Pancreas (tissue), 10 donors: ENCODE measurements at regions of chr17 and their contacts with region 1.

Region 1: DNA sequence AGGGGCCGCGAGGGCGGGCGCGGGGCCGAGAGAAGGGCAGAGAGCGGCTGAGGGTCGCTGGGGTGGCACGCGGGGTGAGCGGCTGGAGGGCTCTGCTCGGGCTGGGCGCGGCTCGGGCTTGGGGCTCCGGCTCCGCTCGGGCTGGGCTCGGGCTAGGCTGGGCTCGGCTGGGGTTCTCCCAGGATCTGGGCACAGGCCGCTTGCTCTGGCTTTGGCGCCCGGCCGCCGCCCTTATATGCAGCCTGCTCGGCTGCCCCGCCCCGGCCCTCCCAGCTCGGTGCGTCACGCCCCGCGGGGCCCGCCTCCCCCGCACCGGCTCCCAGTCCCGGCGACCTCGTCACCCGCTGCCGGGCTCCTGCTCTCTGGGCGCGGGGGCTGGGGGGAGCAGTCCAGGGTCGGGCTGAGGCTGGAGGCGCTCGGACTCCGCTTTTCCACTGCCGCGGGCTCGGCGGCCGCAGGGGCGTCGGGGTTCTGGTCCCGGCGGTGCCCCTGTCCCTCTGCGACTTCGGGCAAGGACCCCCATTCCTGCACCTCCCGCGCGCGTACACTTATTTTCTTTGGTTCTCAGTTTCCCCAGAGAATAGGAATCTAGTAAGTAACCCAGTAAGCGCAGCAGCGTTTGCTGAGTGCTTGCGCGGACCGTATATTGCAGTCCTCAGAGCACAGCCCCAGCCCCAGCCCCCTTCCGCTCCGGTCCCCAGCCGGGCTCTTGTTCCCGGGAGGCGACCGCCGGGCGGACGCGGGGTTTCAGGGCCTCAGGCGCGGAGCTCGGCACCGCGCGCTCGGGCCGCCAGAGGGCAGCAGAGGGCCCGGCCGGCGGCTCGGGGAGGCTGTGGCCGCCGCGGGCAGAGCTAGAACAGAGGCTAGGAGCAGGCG is at the start of gene RASD1:
- DNase-seq: peak; percentile 88 to 98 (median 94)
- ATAC-seq: peak; percentile 91 to 94 (median 93)
- H3K4me3 ChIP-seq: peak within 1 kb of the TSS; percentile 40 to 61 (median 50)
- H3K27ac ChIP-seq: peak within 1 kb of the TSS; percentile 62 to 80 (median 70)
- H3K4me1 ChIP-seq: peaks cover 9 to 11% (median 9%) of the 10 kb centered on the region in 3 donors
- H3K27me3 ChIP-seq: no peaks in the 10 kb centered on the region
- CTCF ChIP-seq: peak; percentile 95 to 98 (median 97)
- total RNA-seq, gene RASD1: 4.9 to 30.7 (median 10.6) TPM

Region 2: GRCh38 chr17:17356149-17356930 is 140.1 kb before region 1 on chr17:
- intact Hi-C with region 1: loop called in 1 of 3 experiments (anchors 5 kb)
- DNase-seq: peak; percentile 56 to 87 (median 74)
- ATAC-seq: peak; percentile 90 to 98 (median 97)
- H3K4me3 ChIP-seq: no peak overlapping the region
- H3K27ac ChIP-seq: no peak overlapping the region
- H3K4me1 ChIP-seq: no peaks in the 10 kb centered on the region
- H3K27me3 ChIP-seq: peaks cover 0 to 3% (median 0%) of the 10 kb centered on the region in 4 donors
- CTCF ChIP-seq: peak; percentile 95 to 98 (median 97)

Region 3: DNA sequence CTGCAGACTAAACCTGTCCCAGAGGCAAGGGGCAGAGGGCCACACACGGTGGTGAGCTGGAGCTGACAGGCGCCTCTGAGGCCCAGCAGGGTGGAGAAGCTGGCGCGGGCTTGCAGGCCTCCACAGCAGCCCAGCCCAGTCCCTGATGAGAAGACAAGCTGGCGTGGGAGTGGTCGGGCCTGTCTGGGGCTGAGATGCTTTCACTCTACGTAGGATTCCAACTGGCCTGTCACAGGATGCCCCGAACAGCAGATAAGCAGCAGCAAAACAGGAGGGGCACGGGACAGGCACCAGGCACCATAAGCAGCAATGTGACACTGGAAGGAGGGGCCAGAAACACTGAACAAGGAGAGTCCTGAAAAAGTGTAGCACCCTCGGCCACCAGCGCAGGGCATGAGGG is 54.9 kb after region 1 on chr17:
- intact Hi-C with region 1: no loop called
- DNase-seq: peak in 1 of 6 donors; percentile 5
- ATAC-seq: no peak
- H3K4me3 ChIP-seq: no peak overlapping the region
- H3K27ac ChIP-seq: no peak overlapping the region
- H3K4me1 ChIP-seq: no peaks in the 10 kb centered on the region
- H3K27me3 ChIP-seq: no peaks in the 10 kb centered on the region
- CTCF ChIP-seq: no peak

Region 4: GRCh38 chr17:17561408-17562145 is 65.2 kb after region 1 on chr17:
- intact Hi-C with region 1: loop called in 2 of 3 experiments (anchors 5 kb)
- DNase-seq: peak in 3 of 6 donors; percentile 73 to 84 (median 73)
- ATAC-seq: peak; percentile 62 to 87 (median 80)
- H3K4me3 ChIP-seq: no peak overlapping the region
- H3K27ac ChIP-seq: peak overlapping the region in 2 of 4 donors; percentile 10 to 19
- H3K4me1 ChIP-seq: no peaks in the 10 kb centered on the region
- H3K27me3 ChIP-seq: no peaks in the 10 kb centered on the region
- CTCF ChIP-seq: no peak

Region 5: GRCh38 chr17:17568749-17569195 is 72.3 kb after region 1 on chr17:
- intact Hi-C with region 1: loop called in 2 of 3 experiments (anchors 5 kb)
- DNase-seq: peak; percentile 82 to 99 (median 90)
- ATAC-seq: peak; percentile 75 to 82 (median 78)
- H3K4me3 ChIP-seq: no peak overlapping the region
- H3K27ac ChIP-seq: peak overlapping the region in 3 of 4 donors; percentile 10 to 55 (median 33)
- H3K4me1 ChIP-seq: peaks cover 30 to 42% (median 30%) of the 10 kb centered on the region in 3 donors
- H3K27me3 ChIP-seq: no peaks in the 10 kb centered on the region
- CTCF ChIP-seq: peak; percentile 65 to 85 (median 79)

Region 6: DNA sequence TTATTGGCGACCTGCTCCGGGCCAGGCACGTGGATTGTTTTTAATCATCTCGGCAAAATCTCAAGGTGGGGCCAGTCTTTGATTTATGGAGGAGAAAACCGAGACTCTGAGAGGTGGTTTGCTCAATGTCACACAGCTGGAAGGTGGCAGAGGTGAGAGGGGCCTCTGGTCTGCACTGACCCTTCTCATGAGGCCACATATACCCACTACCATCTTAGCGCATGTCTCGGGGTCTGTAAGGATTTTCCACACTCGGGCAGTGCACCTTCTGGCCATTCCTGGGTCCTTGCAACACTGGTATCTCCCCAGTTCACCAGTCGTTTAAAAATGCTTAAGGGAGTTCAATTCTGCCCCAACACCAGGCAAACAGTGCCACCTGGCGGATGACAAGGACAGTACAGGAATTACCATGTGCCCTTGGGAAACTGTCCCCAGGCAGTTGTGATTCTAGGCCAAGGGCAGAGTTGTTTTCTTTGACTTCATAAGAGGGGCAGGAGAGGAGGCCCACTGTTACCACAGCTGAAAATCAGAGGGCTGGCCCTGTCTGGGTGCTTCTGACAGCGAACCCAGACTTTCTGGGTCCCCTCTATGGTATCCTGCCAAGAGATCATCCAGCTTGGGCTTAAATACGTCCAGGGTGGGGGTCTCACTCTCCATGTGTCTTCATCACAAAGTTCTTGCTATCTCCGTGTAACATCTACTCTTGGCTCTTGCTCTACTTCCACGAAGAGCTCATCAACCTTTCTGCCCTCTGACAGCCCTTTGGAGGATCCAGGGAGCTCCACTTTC is 145.4 kb after region 1 on chr17:
- intact Hi-C with region 1: loop called in 1 of 3 experiments (anchors 10 kb)
- DNase-seq: peak; percentile 60 to 87 (median 74)
- ATAC-seq: peak; percentile 92 to 98 (median 95)
- H3K4me3 ChIP-seq: no peak overlapping the region
- H3K27ac ChIP-seq: no peak overlapping the region
- H3K4me1 ChIP-seq: no peaks in the 10 kb centered on the region
- H3K27me3 ChIP-seq: no peaks in the 10 kb centered on the region
- CTCF ChIP-seq: peak; percentile 71 to 91 (median 85)

Region 7: GRCh38 chr17:17877529-17878358 is 381.3 kb after region 1 on chr17:
- intact Hi-C with region 1: no loop called
- DNase-seq: peak; percentile 78 to 91 (median 84)
- ATAC-seq: peak; percentile 87 to 93 (median 92)
- H3K4me3 ChIP-seq: no peak overlapping the region
- H3K27ac ChIP-seq: peak overlapping the region; percentile 76 to 96 (median 91)
- H3K4me1 ChIP-seq: peaks cover 27 to 34% (median 29%) of the 10 kb centered on the region in 3 donors
- H3K27me3 ChIP-seq: no peaks in the 10 kb centered on the region
- CTCF ChIP-seq: no peak